ENCODE measurements at regions of chr12 and their contacts with region 1.

Region 1: GRCh38 chr12:29552324-29552927 is 54.9 kb upstream of the OVCH1 start:
- DNase-seq: peak; percentile 58 to 79
- ATAC-seq: peak; percentile 69 to 86 (median 79)
- H3K4me3 ChIP-seq: no peak overlapping the region
- H3K27ac ChIP-seq: peak overlapping the region; percentile 69
- H3K4me1 ChIP-seq: peaks cover 34% of the 10 kb centered on the region
- H3K27me3 ChIP-seq: no peaks in the 10 kb centered on the region
- CTCF ChIP-seq: peak; percentile 94

Region 2: GRCh38 chr12:29640589-29641345 is 88.3 kb after region 1 on chr12:
- intact Hi-C with region 1: loop called in 1 of 2 experiments (anchors 10 kb)
- DNase-seq: peak in 1 of 2 donors; percentile 24
- ATAC-seq: peak; percentile 40 to 50 (median 46)
- H3K4me3 ChIP-seq: peak overlapping the region; percentile 20
- H3K27ac ChIP-seq: peak overlapping the region; percentile 72
- H3K4me1 ChIP-seq: peaks cover 26% of the 10 kb centered on the region
- H3K27me3 ChIP-seq: no peaks in the 10 kb centered on the region
- CTCF ChIP-seq: no peak

Region 3: GRCh38 chr12:29682088-29682487 is 129.7 kb after region 1 on chr12:
- intact Hi-C with region 1: no loop called
- DNase-seq: no peak
- ATAC-seq: no peak
- H3K4me3 ChIP-seq: no peak overlapping the region
- H3K27ac ChIP-seq: no peak overlapping the region
- H3K4me1 ChIP-seq: peaks cover 10% of the 10 kb centered on the region
- H3K27me3 ChIP-seq: no peaks in the 10 kb centered on the region
- CTCF ChIP-seq: no peak

Region 4: GRCh38 chr12:29725587-29726320 is 173.3 kb after region 1 on chr12:
- intact Hi-C with region 1: loop called in 1 of 2 experiments (anchors 10 kb)
- DNase-seq: peak; percentile 43 to 70
- ATAC-seq: peak; percentile 62 to 82 (median 76)
- H3K4me3 ChIP-seq: peak overlapping the region; percentile 26
- H3K27ac ChIP-seq: peak overlapping the region; percentile 85
- H3K4me1 ChIP-seq: peaks cover 69% of the 10 kb centered on the region
- H3K27me3 ChIP-seq: no peaks in the 10 kb centered on the region
- CTCF ChIP-seq: no peak

Region 5: DNA sequence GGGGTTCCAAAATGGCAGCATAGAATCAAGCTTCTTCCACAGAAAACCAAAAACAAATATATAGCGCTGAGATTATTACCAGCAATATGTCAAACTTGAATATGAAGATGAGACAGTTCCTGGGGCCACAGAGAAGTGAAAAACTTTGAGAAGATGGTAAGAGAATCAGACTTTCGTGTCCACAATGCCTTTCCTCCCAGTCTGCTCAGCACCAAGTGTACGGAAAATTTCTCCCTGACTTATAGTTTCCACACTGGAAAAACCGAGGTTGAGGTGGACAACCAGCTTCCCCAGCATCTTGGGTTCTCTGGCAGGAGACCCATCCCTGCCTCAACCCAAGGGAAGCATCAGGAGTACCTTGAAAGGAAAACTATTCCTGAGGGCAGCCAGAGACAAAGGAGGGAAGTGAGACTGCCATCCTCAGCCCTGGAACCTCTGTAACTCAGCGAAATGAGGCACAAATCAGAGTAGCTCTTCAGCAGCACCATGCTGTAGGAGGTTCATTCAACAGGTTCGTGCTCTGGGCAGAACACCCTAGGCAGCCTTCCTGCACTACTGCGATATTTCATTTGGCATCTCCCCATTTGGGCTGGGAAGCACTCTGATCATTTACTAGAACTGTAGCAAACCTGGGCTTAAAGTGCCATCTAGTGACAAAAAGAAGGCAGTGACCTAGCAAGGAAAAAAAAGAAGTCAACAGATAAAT is 1254.7 kb after region 1 on chr12:
- intact Hi-C with region 1: loop called in 1 of 2 experiments (anchors 5 kb)
- DNase-seq: no peak
- ATAC-seq: peak; percentile 82 to 97 (median 88)
- H3K4me3 ChIP-seq: peak overlapping the region; percentile 4
- H3K27ac ChIP-seq: no peak overlapping the region
- H3K4me1 ChIP-seq: no peaks in the 10 kb centered on the region
- H3K27me3 ChIP-seq: no peaks in the 10 kb centered on the region
- CTCF ChIP-seq: peak; percentile 79